ENCODE measurements at regions of chr15 and their contacts with region 1.

Region 1: GRCh38 chr15:59410391-59410896 is 27.5 kb upstream of the FAM81A start:
- DNase-seq: no peak
- ATAC-seq: peak in 1 of 4 donors; percentile 73
- H3K4me3 ChIP-seq: no peak overlapping the region
- H3K27ac ChIP-seq: peak overlapping the region in 1 of 12 donors; percentile 11
- H3K4me1 ChIP-seq: peaks cover 0 to 39% (median 0%) of the 10 kb centered on the region in 12 donors
- H3K27me3 ChIP-seq: no peaks in the 10 kb centered on the region
- CTCF ChIP-seq: no peak
- POLR2A ChIP-seq: no peak

Region 2: DNA sequence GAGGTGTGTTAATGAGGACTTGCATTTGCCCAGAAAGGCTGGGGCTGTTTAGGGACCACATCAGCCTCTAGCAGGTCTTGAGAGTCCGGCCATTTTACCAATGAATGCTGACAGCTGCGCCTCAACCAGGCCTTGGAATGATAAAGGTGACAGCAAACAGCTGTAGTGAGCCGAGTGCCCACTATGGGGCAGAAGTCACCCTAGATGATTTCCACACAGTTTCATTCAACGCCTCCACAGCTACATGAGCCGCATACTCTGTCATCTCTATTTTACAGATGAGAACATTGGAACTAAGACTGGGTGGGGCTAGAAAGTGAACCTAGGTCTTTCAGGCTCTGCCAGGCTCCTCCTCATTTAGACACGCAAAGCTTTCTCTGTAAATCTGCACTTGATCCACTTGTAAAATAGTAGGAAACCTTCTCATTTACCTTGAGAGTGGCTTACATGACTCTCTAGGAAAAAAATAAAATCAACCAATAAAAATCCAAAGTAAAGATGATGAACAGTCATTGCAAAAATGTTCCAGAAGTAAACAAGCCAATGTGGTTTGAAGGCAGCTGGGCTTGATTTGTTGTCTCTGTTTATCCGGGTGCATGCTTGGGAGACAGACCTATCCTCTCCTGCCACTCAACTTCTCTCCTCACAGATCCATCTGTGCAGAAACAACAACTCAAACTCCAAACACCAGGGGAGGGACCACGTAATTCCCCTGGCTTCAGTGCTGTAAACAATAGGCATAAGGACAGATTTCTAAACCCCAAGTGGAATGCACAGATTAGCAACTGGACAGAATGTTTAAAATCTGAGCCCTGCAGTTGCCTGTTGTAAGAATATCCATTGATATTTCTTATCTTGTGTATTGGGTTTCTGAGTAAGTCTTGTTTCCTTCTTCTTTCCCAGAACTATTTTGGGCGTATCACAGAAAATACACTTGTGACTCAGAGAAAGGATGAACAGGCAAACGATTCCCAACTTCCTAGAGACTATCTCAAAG is 235.3 kb before region 1 on chr15:
- intact Hi-C with region 1: loop called in 1 of 10 experiments (anchors 10 kb)
- DNase-seq: peak in 3 of 5 donors; percentile 30 to 61 (median 33)
- ATAC-seq: peak; percentile 78 to 89 (median 85)
- H3K4me3 ChIP-seq: no peak overlapping the region
- H3K27ac ChIP-seq: peak overlapping the region in 4 of 12 donors; percentile 27 to 89 (median 42)
- H3K4me1 ChIP-seq: peaks cover 0 to 57% (median 8%) of the 10 kb centered on the region in 12 donors
- H3K27me3 ChIP-seq: no peaks in the 10 kb centered on the region
- CTCF ChIP-seq: peak; percentile 40 to 68 (median 55)
- POLR2A ChIP-seq: no peak

Region 3: GRCh38 chr15:59473226-59473625 is 62.8 kb after region 1 on chr15:
- intact Hi-C with region 1: no loop called
- DNase-seq: no peak
- ATAC-seq: no peak
- H3K4me3 ChIP-seq: no peak overlapping the region
- H3K27ac ChIP-seq: no peak overlapping the region
- H3K4me1 ChIP-seq: no peaks in the 10 kb centered on the region
- H3K27me3 ChIP-seq: no peaks in the 10 kb centered on the region
- CTCF ChIP-seq: no peak
- POLR2A ChIP-seq: no peak

Measured in heart left ventricle (tissue), 16 donors.